Natural killer cell (primary cell): ENCODE measurements at regions of chr15 and their contacts with region 1.

Region 1: DNA sequence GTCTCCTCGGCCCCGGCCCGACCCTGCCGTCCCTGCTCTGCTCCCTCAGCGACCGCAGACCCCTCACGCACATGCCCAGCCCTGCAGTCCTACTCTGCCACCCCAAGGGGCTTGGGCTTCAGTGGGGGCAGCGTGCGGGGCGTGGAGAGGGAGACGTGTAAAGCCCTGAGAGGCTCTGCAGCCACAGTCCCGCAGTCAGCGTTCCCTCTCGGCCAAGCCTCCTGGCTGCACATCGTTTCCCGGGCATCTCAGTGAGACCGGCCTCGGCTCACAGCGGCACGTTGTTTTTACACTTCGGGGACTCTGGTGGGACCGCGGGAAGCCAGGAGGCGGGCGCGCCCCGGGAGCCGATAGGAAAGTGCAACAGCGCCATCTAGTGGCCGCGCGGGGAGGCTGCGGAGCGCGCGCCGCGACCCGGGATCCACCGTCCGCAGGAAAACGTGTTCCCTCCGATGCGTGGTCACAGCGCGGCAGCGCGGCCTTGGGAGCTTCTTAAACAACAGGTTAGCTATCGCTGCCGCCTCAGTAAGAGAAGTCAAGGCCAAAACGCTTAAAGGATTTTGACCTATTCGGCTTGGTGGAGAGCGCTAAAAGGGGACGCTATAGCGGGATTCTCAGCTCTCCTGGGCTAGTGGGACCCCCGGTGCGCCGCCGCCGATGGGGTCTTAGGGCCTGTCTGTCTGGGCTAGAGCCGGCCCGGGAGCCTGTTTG is 226.8 kb upstream of the IGF1R start:
- DNase-seq: peak; percentile 62 to 70
- ATAC-seq: peak; percentile 61 to 90 (median 63)
- H3K4me3 ChIP-seq: no peak overlapping the region
- H3K4me3 Mint-ChIP-seq: peak overlapping the region; percentile 13
- H3K27ac ChIP-seq: no peak overlapping the region
- H3K27ac Mint-ChIP-seq: no peak overlapping the region
- H3K4me1 ChIP-seq: peaks cover 11% of the 10 kb centered on the region
- H3K4me1 Mint-ChIP-seq: peaks cover 0 to 11% of the 10 kb centered on the region in 2 donors
- H3K27me3 ChIP-seq: peaks cover 14% of the 10 kb centered on the region
- H3K27me3 Mint-ChIP-seq: peaks cover 38 to 39% of the 10 kb centered on the region in 2 donors
- CTCF ChIP-seq: peak; percentile 98

Region 2: GRCh38 chr15:97909291-97909891 is 512.2 kb before region 1 on chr15:
- intact Hi-C with region 1: loop called (anchors 5 kb)
- DNase-seq: peak; percentile 61 to 70
- ATAC-seq: peak; percentile 80 to 97 (median 97)
- H3K4me3 ChIP-seq: no peak overlapping the region
- H3K4me3 Mint-ChIP-seq: no peak overlapping the region
- H3K27ac ChIP-seq: no peak overlapping the region
- H3K27ac Mint-ChIP-seq: no peak overlapping the region
- H3K4me1 ChIP-seq: no peaks in the 10 kb centered on the region
- H3K4me1 Mint-ChIP-seq: no peaks in the 10 kb centered on the region
- H3K27me3 ChIP-seq: no peaks in the 10 kb centered on the region
- H3K27me3 Mint-ChIP-seq: peaks cover 39 to 69% of the 10 kb centered on the region in 2 donors
- CTCF ChIP-seq: peak; percentile 96

Region 3: DNA sequence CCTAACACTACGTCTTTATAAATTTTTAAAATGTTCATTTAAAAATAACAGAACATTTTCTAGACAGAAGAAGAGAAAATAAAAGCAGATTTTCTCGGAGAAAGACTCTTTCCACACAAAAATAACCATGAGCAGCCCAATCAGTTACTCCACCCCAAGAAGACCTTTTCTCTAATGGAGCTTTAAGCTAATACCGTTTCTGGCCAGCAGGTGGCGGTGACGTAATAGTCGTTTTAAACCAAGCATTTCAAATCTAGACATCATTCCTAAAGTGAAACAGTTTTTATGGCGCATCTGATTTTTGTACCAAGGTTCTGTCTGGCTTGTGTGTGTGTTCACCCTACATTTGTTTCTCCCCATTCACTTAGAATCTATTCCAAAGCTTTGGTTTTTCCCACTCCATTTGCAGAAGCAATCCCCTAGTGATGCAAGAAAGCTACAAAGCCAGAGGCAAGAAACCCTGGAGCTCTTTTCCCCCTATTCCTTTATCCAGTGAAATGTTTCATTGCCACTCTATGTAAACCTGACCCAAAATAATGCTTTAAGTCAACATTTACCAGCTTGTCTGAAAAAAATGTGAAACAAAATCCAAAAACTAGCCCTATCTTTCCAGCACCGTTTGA is 109.9 kb before region 1 on chr15:
- intact Hi-C with region 1: loop called (anchors 1 kb)
- DNase-seq: peak; percentile 62 to 72
- ATAC-seq: peak in 2 of 3 donors; percentile 59 to 71
- H3K4me3 ChIP-seq: no peak overlapping the region
- H3K4me3 Mint-ChIP-seq: no peak overlapping the region
- H3K27ac ChIP-seq: no peak overlapping the region
- H3K27ac Mint-ChIP-seq: no peak overlapping the region
- H3K4me1 ChIP-seq: no peaks in the 10 kb centered on the region
- H3K4me1 Mint-ChIP-seq: peaks cover 0 to 5% of the 10 kb centered on the region in 2 donors
- H3K27me3 ChIP-seq: no peaks in the 10 kb centered on the region
- H3K27me3 Mint-ChIP-seq: peaks cover 15 to 16% of the 10 kb centered on the region in 2 donors
- CTCF ChIP-seq: peak; percentile 90

Region 4: DNA sequence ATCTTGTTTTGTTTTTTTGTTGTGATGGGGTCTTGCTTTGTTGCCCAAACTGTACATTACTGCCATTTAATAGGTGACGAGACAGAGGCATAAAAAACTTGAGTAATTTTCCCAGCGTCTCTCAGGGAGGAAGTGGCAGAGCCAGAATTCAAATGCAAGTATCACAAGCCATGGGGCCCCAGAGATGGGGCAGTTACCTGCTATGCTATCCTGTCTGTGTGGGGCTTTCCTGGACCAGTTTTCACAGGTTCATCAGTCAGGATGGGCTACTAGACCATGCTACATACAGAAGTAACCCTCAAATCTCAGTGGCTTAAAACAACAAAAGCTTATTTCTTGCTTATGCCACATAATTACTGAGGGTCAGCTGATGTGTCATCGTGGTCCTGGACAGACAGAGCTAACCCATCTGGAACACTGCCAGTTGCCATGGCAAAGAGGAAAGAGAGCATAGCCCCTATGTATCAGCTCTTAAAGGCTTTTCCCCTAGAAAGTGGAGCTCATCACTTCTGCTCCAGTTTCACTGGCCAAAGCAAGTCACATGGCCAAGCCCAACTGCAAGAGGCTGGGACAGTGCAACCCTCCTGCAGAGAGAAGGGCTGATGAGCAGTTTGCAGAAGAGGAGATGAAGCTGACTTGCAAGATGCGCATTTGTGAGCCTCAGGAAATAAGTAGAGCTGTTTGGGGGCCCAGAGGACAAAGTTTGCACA is 651.6 kb after region 1 on chr15:
- intact Hi-C with region 1: no loop called
- DNase-seq: no peak
- ATAC-seq: no peak
- H3K4me3 ChIP-seq: no peak overlapping the region
- H3K4me3 Mint-ChIP-seq: no peak overlapping the region
- H3K27ac ChIP-seq: no peak overlapping the region
- H3K27ac Mint-ChIP-seq: no peak overlapping the region
- H3K4me1 ChIP-seq: peaks cover 3% of the 10 kb centered on the region
- H3K4me1 Mint-ChIP-seq: peaks cover 9% of the 10 kb centered on the region in 2 donors
- H3K27me3 ChIP-seq: no peaks in the 10 kb centered on the region
- H3K27me3 Mint-ChIP-seq: peaks cover 4 to 7% of the 10 kb centered on the region in 2 donors
- CTCF ChIP-seq: no peak

Region 5: GRCh38 chr15:99250494-99251435 is 829.2 kb after region 1 on chr15:
- intact Hi-C with region 1: no loop called
- DNase-seq: peak; percentile 85 to 98
- ATAC-seq: peak; percentile 96 to 98 (median 97)
- H3K4me3 ChIP-seq: peak overlapping the region; percentile 61
- H3K4me3 Mint-ChIP-seq: peak overlapping the region; percentile 95
- H3K27ac ChIP-seq: peak overlapping the region; percentile 76
- H3K27ac Mint-ChIP-seq: peak overlapping the region; percentile 86 to 90
- H3K4me1 ChIP-seq: peaks cover 14% of the 10 kb centered on the region
- H3K4me1 Mint-ChIP-seq: peaks cover 22 to 26% of the 10 kb centered on the region in 2 donors
- H3K27me3 ChIP-seq: no peaks in the 10 kb centered on the region
- H3K27me3 Mint-ChIP-seq: peaks cover 0 to 2% of the 10 kb centered on the region in 2 donors
- CTCF ChIP-seq: no peak